HepG2 (cell line): ENCODE measurements at regions of chr7 and their contacts with region 1.

Region 1: GRCh38 chr7:5088906-5089305 is 43.2 kb downstream of the RBAK start:
- DNase-seq: no peak
- ATAC-seq: no peak
- H3K4me3 ChIP-seq: peak overlapping the region in 1 of 3 experiments; percentile 12; a peak in 1 of 6 replicates
- H3K27ac ChIP-seq: no peak overlapping the region
- H3K4me1 ChIP-seq: peaks cover 11% of the 10 kb centered on the region; the same call in 1 of the 2 replicates
- H3K27me3 ChIP-seq: peaks cover 4 to 9% of the 10 kb centered on the region in 2 experiments; a peak in 3 of 5 replicates
- CTCF ChIP-seq: no peak
- EP300 ChIP-seq: no peak
- POLR2A ChIP-seq: no peak
- RAD21 ChIP-seq: no peak

Region 2: GRCh38 chr7:4725014-4725849 is 363.7 kb before region 1 on chr7:
- CTCF ChIA-PET with region 1: no interaction called
- POLR2A ChIA-PET with region 1: no interaction called
- in situ Hi-C with region 1: no loop called
- intact Hi-C with region 1: no loop called
- DNase-seq: peak; percentile 74
- ATAC-seq: peak; percentile 84
- H3K4me3 ChIP-seq: peak overlapping the region; percentile 65 to 74 (median 71)
- H3K27ac ChIP-seq: peak overlapping the region; percentile 75
- H3K4me1 ChIP-seq: peaks cover 28% of the 10 kb centered on the region
- H3K27me3 ChIP-seq: no peaks in the 10 kb centered on the region
- CTCF ChIP-seq: peak; percentile 31; the same call in 1 of the 2 replicates
- EP300 ChIP-seq: no peak
- POLR2A ChIP-seq: peak in 1 of 2 experiments; percentile 61; a peak in 1 of 4 replicates
- RAD21 ChIP-seq: no peak

Region 3: GRCh38 chr7:4797858-4798705 is 290.8 kb before region 1 on chr7:
- CTCF ChIA-PET with region 1: interaction called, 17 read pairs
- POLR2A ChIA-PET with region 1: no interaction called
- in situ Hi-C with region 1: loop called (anchors 10 kb)
- intact Hi-C with region 1: no loop called
- DNase-seq: peak; percentile 31
- ATAC-seq: peak; percentile 76
- H3K4me3 ChIP-seq: peak overlapping the region in 1 of 3 experiments; percentile 26; a peak in 1 of 6 replicates
- H3K27ac ChIP-seq: no peak overlapping the region
- H3K4me1 ChIP-seq: peaks cover 8% of the 10 kb centered on the region
- H3K27me3 ChIP-seq: peaks cover 1 to 12% of the 10 kb centered on the region in 2 experiments; a peak in 2 of 5 replicates
- CTCF ChIP-seq: peak; percentile 92
- EP300 ChIP-seq: no peak
- POLR2A ChIP-seq: no peak
- RAD21 ChIP-seq: peak; percentile 82

Region 4: GRCh38 chr7:4830176-4830575 is 258.7 kb before region 1 on chr7:
- CTCF ChIA-PET with region 1: interaction called, 41 read pairs
- POLR2A ChIA-PET with region 1: no interaction called
- in situ Hi-C with region 1: loop called (anchors 5 kb)
- intact Hi-C with region 1: loop called (anchors 1 kb)
- DNase-seq: peak; percentile 78
- ATAC-seq: peak; percentile 97
- H3K4me3 ChIP-seq: no peak overlapping the region
- H3K27ac ChIP-seq: no peak overlapping the region
- H3K4me1 ChIP-seq: no peaks in the 10 kb centered on the region
- H3K27me3 ChIP-seq: peaks cover 0 to 20% of the 10 kb centered on the region in 2 experiments; a peak in 2 of 5 replicates
- CTCF ChIP-seq: peak; percentile 100
- EP300 ChIP-seq: no peak
- POLR2A ChIP-seq: no peak
- RAD21 ChIP-seq: peak; percentile 96

Region 5: GRCh38 chr7:4973728-4974198 is 115.1 kb before region 1 on chr7:
- CTCF ChIA-PET with region 1: no interaction called
- POLR2A ChIA-PET with region 1: no interaction called
- in situ Hi-C with region 1: no loop called
- intact Hi-C with region 1: loop called (anchors 5 kb)
- DNase-seq: peak; percentile 89
- ATAC-seq: peak; percentile 97
- H3K4me3 ChIP-seq: peak overlapping the region; percentile 89 to 97 (median 89); a peak in 5 of 6 replicates
- H3K27ac ChIP-seq: peak overlapping the region; percentile 78
- H3K4me1 ChIP-seq: peaks cover 19% of the 10 kb centered on the region
- H3K27me3 ChIP-seq: no peaks in the 10 kb centered on the region
- CTCF ChIP-seq: peak; percentile 98
- EP300 ChIP-seq: no peak
- POLR2A ChIP-seq: peak; percentile 73 to 91
- RAD21 ChIP-seq: peak; percentile 61

Region 6: GRCh38 chr7:5045558-5046396 is 43.1 kb before region 1 on chr7 and contains the start of gene RBAK:
- CTCF ChIA-PET with region 1: no interaction called
- POLR2A ChIA-PET with region 1: no interaction called
- in situ Hi-C with region 1: no loop called
- intact Hi-C with region 1: no loop called
- DNase-seq: peak; percentile 92
- ATAC-seq: peak; percentile 99
- H3K4me3 ChIP-seq: peak within 1 kb of the TSS; percentile 73 to 92 (median 79)
- H3K27ac ChIP-seq: peak within 1 kb of the TSS; percentile 83
- H3K4me1 ChIP-seq: peaks cover 10% of the 10 kb centered on the region
- H3K27me3 ChIP-seq: no peaks in the 10 kb centered on the region
- CTCF ChIP-seq: no peak; the same call in 1 of the 2 replicates
- EP300 ChIP-seq: no peak
- POLR2A ChIP-seq: peak; percentile 71 to 90
- RAD21 ChIP-seq: peak; percentile 31; the same call in 1 of the 2 replicates
- total RNA-seq, gene RBAK: 11.8 and 14.9 TPM in 2 replicates